ENCODE measurements at regions of chr1 and their contacts with region 1.

Region 1: GRCh38 chr1:42913426-42914091 is 45.1 kb downstream of the SLC2A1 start:
- DNase-seq: peak; percentile 86
- ATAC-seq: peak; percentile 98
- H3K4me3 ChIP-seq: no peak overlapping the region
- H3K4me3 Mint-ChIP-seq: no peak overlapping the region
- H3K27ac ChIP-seq: no peak overlapping the region
- H3K27ac Mint-ChIP-seq: peak overlapping the region; percentile 44
- H3K4me1 ChIP-seq: peaks cover 0 to 4% of the 10 kb centered on the region in 2 donors
- H3K4me1 Mint-ChIP-seq: peaks cover 5% of the 10 kb centered on the region
- H3K27me3 ChIP-seq: no peaks in the 10 kb centered on the region
- H3K27me3 Mint-ChIP-seq: peaks cover 5% of the 10 kb centered on the region
- CTCF ChIP-seq: peak; percentile 89

Region 2: GRCh38 chr1:42576935-42577334 is 336.6 kb before region 1 on chr1:
- CTCF ChIA-PET with region 1: interaction called, 8 read pairs
- POLR2A ChIA-PET with region 1: no interaction called
- intact Hi-C with region 1: loop called (anchors 5 kb)
- DNase-seq: no peak
- ATAC-seq: no peak
- H3K4me3 ChIP-seq: no peak overlapping the region
- H3K4me3 Mint-ChIP-seq: no peak overlapping the region
- H3K27ac ChIP-seq: no peak overlapping the region
- H3K27ac Mint-ChIP-seq: no peak overlapping the region
- H3K4me1 ChIP-seq: no peaks in the 10 kb centered on the region
- H3K4me1 Mint-ChIP-seq: no peaks in the 10 kb centered on the region
- H3K27me3 ChIP-seq: no peaks in the 10 kb centered on the region
- H3K27me3 Mint-ChIP-seq: no peaks in the 10 kb centered on the region
- CTCF ChIP-seq: no peak

Region 3: DNA sequence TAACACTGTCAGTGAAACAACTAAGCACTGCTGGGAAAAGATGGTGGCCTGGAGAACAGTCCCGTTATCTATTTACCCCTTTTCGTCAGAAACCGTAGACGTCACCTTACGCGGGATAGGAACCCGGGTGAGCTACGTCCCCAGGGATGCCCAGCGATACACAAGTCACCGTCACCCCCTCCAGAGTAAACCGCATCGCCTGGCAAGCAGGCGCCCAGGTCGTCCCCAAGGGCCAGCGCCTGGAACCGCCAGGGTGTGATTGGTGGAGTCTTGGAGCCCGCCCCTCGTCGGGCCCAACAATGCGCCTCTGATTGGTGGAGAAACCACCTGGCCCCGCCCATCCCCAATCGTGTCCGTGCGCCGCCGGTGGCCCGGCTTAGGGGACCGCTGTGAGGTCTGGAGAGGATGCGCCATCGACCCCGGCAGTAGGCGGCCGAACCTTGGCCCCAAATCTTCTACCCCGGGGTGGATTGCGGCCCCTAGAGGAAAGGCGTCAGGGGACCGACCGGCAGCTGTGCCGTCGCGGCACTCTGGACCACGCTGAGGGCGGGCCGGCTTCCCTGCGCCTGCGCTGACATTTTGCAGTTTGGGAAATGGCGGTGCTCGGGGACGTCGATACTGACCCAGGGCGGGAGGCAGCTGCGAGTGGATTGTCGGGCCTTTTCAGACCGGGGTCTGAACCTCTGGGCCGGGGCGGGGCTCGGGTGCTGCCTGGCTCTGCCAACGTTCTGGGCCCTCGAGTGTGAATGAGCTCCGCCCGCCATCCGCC is 10.7 kb after region 1 on chr1:
- CTCF ChIA-PET with region 1: interaction called, 91 read pairs
- POLR2A ChIA-PET with region 1: interaction called, 5 read pairs
- intact Hi-C with region 1: loop called (anchors 1 kb)
- DNase-seq: peak; percentile 97
- ATAC-seq: peak; percentile 86
- H3K4me3 ChIP-seq: peak overlapping the region; percentile 48 to 83 (median 80)
- H3K4me3 Mint-ChIP-seq: peak overlapping the region; percentile 86
- H3K27ac ChIP-seq: peak overlapping the region; percentile 96 to 98
- H3K27ac Mint-ChIP-seq: peak overlapping the region; percentile 92
- H3K4me1 ChIP-seq: peaks cover 23% of the 10 kb centered on the region in 2 donors
- H3K4me1 Mint-ChIP-seq: peaks cover 43% of the 10 kb centered on the region
- H3K27me3 ChIP-seq: no peaks in the 10 kb centered on the region
- H3K27me3 Mint-ChIP-seq: no peaks in the 10 kb centered on the region
- CTCF ChIP-seq: no peak

Region 4: DNA sequence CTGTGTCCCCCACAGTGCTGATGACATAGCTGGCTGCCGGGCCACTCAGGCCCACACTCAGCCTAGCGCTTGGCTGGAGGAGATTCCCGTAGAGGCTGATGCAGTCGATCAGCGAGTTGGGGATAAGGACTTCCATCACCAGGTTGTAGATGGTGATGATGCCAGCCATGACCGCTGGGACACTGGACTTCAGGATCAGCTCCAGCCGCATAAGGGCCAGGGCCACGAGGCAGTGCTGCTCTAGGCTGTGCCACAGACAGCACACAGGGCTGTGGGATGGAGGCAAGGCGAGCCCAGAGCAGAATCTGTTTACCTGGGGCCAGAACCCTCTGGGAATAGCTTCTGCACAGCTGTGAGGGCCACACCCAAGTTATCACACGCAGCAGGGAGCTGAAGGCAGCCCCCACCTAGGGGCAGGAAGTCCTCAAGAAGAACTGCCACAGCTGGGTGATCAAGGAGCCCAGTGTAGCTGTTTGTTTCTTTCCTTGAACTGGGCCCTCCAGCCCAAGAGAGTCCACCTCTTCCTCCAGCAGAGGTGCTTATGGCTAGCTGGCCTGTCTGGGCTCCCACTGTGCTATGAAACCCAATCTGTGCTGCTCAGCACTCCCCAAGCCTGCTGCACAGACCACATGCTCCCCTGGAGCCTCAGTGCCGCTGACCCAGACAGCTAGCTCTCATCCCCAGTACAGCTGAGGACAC is 38.9 kb after region 1 on chr1:
- CTCF ChIA-PET with region 1: interaction called, 12 read pairs
- POLR2A ChIA-PET with region 1: interaction called, 4 read pairs
- intact Hi-C with region 1: no loop called
- DNase-seq: peak; percentile 89
- ATAC-seq: peak; percentile 82
- H3K4me3 ChIP-seq: peak overlapping the region in 4 of 5 experiments; percentile 19 to 56 (median 30)
- H3K4me3 Mint-ChIP-seq: peak overlapping the region; percentile 93
- H3K27ac ChIP-seq: peak overlapping the region; percentile 94 to 95
- H3K27ac Mint-ChIP-seq: peak overlapping the region; percentile 99
- H3K4me1 ChIP-seq: peaks cover 91 to 99% of the 10 kb centered on the region in 2 donors
- H3K4me1 Mint-ChIP-seq: peaks cover 91% of the 10 kb centered on the region
- H3K27me3 ChIP-seq: no peaks in the 10 kb centered on the region
- H3K27me3 Mint-ChIP-seq: no peaks in the 10 kb centered on the region
- CTCF ChIP-seq: no peak

Region 5: DNA sequence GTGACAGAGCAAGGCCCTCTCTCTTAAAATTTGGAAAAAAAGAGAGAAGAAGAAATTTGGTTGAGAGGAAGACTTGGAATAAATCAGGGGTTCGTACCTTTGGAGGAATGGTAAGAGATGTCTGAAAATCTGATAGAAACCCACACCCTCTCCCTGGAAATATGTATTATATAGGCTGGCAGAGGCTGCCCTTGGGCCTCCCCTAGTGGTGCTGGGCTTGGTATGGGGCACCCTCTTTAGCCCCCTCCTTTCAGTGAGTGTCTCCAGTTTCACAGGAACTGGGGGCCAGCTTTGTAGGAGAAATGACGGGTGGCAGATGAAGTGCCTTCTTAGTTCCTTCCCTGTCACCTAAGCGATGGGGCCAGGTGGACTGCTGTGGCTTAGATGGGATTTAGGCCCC is 128.0 kb after region 1 on chr1:
- CTCF ChIA-PET with region 1: interaction called, 10 read pairs
- POLR2A ChIA-PET with region 1: no interaction called
- intact Hi-C with region 1: no loop called
- DNase-seq: no peak
- ATAC-seq: no peak
- H3K4me3 ChIP-seq: no peak overlapping the region
- H3K4me3 Mint-ChIP-seq: no peak overlapping the region
- H3K27ac ChIP-seq: no peak overlapping the region
- H3K27ac Mint-ChIP-seq: no peak overlapping the region
- H3K4me1 ChIP-seq: peaks cover 0 to 4% of the 10 kb centered on the region in 2 donors
- H3K4me1 Mint-ChIP-seq: peaks cover 7% of the 10 kb centered on the region
- H3K27me3 ChIP-seq: no peaks in the 10 kb centered on the region
- H3K27me3 Mint-ChIP-seq: peaks cover under 1% of the 10 kb centered on the region
- CTCF ChIP-seq: no peak

Region 6: GRCh38 chr1:43082740-43083139 is 169.2 kb after region 1 on chr1:
- CTCF ChIA-PET with region 1: interaction called, 1,178 read pairs
- POLR2A ChIA-PET with region 1: no interaction called
- intact Hi-C with region 1: no loop called
- DNase-seq: no peak
- ATAC-seq: no peak
- H3K4me3 ChIP-seq: no peak overlapping the region
- H3K4me3 Mint-ChIP-seq: no peak overlapping the region
- H3K27ac ChIP-seq: no peak overlapping the region
- H3K27ac Mint-ChIP-seq: no peak overlapping the region
- H3K4me1 ChIP-seq: no peaks in the 10 kb centered on the region
- H3K4me1 Mint-ChIP-seq: no peaks in the 10 kb centered on the region
- H3K27me3 ChIP-seq: peaks cover 0 to 2% (median 0%) of the 10 kb centered on the region in 4 experiments
- H3K27me3 Mint-ChIP-seq: peaks cover 17% of the 10 kb centered on the region
- CTCF ChIP-seq: no peak

Region 7: GRCh38 chr1:43405876-43406234 is 492.3 kb after region 1 on chr1:
- CTCF ChIA-PET with region 1: no interaction called
- POLR2A ChIA-PET with region 1: no interaction called
- intact Hi-C with region 1: loop called (anchors 2 kb)
- DNase-seq: no peak
- ATAC-seq: no peak
- H3K4me3 ChIP-seq: no peak overlapping the region
- H3K4me3 Mint-ChIP-seq: no peak overlapping the region
- H3K27ac ChIP-seq: no peak overlapping the region
- H3K27ac Mint-ChIP-seq: no peak overlapping the region
- H3K4me1 ChIP-seq: no peaks in the 10 kb centered on the region
- H3K4me1 Mint-ChIP-seq: no peaks in the 10 kb centered on the region
- H3K27me3 ChIP-seq: no peaks in the 10 kb centered on the region
- H3K27me3 Mint-ChIP-seq: no peaks in the 10 kb centered on the region
- CTCF ChIP-seq: no peak

Measured in B cell (primary cell).